ENCODE measurements at regions of chr6 and their contacts with region 1.

Region 1: GRCh38 chr6:32853541-32854375 is at the starts of genes PSMB9 and TAP1:
- DNase-seq: peak; percentile 94 to 95 (median 94)
- H3K4me3 ChIP-seq: peak within 1 kb of the TSS; percentile 79 to 99 (median 98)
- H3K4me3 Mint-ChIP-seq: peak within 1 kb of the TSS; percentile 99 to 100
- H3K27ac ChIP-seq: peak within 1 kb of the TSS; percentile 93 to 99
- H3K27ac Mint-ChIP-seq: peak within 1 kb of the TSS; percentile 97 to 100 (median 99)
- H3K4me1 ChIP-seq: peaks cover 44 to 58% of the 10 kb centered on the region in 2 donors
- H3K4me1 Mint-ChIP-seq: peaks cover 65% of the 10 kb centered on the region
- H3K27me3 ChIP-seq: no peaks in the 10 kb centered on the region
- H3K27me3 Mint-ChIP-seq: peaks cover 0 to 5% (median 1%) of the 10 kb centered on the region in 3 donors
- CTCF ChIP-seq: peak; percentile 85
- polyA plus RNA-seq, gene PSMB9: 204 to 405 (median 350) TPM
- polyA plus RNA-seq, gene TAP1: 119 to 221 (median 204) TPM

Region 2: DNA sequence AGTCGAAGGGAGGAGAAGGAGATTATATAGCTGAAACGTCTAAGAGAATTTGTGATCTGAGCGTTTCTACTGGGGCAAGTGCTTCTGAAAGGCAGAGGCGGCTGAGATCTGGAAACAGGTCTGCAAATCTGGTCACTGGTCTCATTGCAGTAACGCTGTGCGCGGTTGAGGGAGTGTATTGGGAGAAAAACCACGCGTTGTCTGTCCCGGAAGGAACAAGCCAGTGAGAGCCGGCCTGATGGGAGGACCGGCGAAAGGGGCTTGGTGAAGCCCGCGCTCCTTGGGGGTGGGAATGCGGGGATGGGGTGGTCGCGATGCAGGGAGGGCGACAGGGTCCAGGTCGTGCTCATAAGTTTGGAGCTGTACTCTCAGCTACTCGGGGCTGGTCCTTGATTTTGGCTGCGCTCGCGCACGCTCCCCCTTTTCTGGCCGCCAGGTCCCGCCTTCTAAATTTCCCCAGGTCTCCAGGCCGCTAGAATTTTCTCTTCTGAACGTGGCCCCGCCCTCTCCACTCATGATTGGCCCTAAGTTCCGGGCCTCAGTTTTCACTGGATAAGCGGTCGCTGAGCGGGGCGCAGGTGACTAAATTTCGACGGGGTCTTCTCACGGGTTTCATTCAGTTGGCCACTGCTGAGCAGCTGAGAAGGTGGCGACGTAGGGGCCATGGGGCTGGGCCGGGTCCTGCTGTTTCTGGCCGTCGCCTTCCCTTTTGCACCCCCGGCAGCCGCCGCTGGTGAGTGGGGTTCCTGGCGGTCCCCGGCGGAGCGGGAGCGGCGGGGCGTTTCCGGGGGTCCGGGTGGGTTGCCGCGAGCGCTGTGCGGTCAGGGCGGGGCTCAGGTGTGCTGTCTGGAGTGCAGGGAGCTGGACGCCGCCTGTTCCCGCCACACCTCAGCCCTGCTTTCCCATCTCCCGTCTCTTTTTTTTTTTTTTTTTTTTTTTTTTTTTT is 1356.0 kb before region 1 on chr6 and contains the start of gene MICB:
- intact Hi-C with region 1: no loop called
- DNase-seq: peak; percentile 51 to 68 (median 61)
- H3K4me3 ChIP-seq: peak within 1 kb of the TSS; percentile 51 to 98 (median 67)
- H3K4me3 Mint-ChIP-seq: peak within 1 kb of the TSS; percentile 85 to 96
- H3K27ac ChIP-seq: peak within 1 kb of the TSS; percentile 19 to 71
- H3K27ac Mint-ChIP-seq: peak within 1 kb of the TSS; percentile 78 to 95 (median 87)
- H3K4me1 ChIP-seq: peaks cover 47 to 62% of the 10 kb centered on the region in 2 donors
- H3K4me1 Mint-ChIP-seq: peaks cover 70% of the 10 kb centered on the region
- H3K27me3 ChIP-seq: no peaks in the 10 kb centered on the region
- H3K27me3 Mint-ChIP-seq: peaks cover 0 to 2% (median 0%) of the 10 kb centered on the region in 3 donors
- CTCF ChIP-seq: no peak
- polyA plus RNA-seq, gene MICB: 8.1 to 34.8 (median 11.4) TPM

Region 3: DNA sequence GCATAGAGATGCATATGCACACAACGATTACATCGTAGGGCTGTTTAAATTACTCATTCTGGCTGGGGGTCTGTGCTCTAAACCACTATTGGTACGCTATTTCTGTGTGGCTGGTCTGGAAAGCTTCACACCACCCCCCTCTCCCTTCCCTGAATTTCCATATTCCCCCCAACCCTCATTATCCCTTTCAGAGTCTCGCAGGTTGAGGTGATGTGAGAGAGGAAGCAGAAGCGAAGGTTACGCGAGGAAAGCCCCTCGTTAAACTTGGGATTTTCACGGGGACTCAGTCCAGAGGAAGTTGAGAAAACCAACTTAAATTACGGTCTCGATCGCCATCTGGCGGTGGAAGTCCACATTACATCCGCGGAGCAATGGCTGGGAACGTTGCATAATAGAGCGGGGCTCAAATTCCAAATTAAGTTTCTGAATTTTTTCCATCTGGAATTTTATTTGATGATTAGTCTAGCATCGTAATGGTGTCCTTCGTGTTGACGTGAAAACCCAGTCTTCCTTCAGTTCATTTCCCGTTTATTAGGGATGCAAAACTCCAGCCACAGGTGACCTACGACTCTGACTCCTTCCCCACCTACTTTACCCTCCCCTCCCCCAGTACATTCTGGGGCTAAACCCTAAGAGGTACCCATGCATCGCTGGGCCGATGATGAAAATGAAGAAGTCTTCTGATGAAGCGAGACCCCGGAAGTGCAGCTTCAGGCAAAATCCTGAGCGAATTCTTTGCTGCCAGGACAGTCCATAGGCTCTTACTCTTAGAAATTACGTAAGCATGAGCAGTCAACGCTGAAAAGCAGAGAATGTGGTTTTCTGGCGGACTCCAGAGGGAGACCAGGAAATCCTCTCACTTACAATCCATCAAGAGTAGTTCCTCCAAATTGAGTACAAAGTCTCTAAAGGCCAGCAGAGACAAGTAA is 56.6 kb before region 1 on chr6:
- intact Hi-C with region 1: no loop called
- DNase-seq: peak; percentile 65 to 88 (median 76)
- H3K4me3 ChIP-seq: peak overlapping the region; percentile 0 to 69 (median 31)
- H3K4me3 Mint-ChIP-seq: peak overlapping the region; percentile 72 to 93
- H3K27ac ChIP-seq: peak overlapping the region; percentile 8 to 42
- H3K27ac Mint-ChIP-seq: peak overlapping the region; percentile 62 to 90 (median 87)
- H3K4me1 ChIP-seq: peaks cover 43 to 46% of the 10 kb centered on the region in 2 donors
- H3K4me1 Mint-ChIP-seq: peaks cover 43% of the 10 kb centered on the region
- H3K27me3 ChIP-seq: peaks cover 0 to 5% of the 10 kb centered on the region in 2 donors
- H3K27me3 Mint-ChIP-seq: peaks cover 0 to 4% (median 3%) of the 10 kb centered on the region in 3 donors
- CTCF ChIP-seq: peak; percentile 92

Region 4: DNA sequence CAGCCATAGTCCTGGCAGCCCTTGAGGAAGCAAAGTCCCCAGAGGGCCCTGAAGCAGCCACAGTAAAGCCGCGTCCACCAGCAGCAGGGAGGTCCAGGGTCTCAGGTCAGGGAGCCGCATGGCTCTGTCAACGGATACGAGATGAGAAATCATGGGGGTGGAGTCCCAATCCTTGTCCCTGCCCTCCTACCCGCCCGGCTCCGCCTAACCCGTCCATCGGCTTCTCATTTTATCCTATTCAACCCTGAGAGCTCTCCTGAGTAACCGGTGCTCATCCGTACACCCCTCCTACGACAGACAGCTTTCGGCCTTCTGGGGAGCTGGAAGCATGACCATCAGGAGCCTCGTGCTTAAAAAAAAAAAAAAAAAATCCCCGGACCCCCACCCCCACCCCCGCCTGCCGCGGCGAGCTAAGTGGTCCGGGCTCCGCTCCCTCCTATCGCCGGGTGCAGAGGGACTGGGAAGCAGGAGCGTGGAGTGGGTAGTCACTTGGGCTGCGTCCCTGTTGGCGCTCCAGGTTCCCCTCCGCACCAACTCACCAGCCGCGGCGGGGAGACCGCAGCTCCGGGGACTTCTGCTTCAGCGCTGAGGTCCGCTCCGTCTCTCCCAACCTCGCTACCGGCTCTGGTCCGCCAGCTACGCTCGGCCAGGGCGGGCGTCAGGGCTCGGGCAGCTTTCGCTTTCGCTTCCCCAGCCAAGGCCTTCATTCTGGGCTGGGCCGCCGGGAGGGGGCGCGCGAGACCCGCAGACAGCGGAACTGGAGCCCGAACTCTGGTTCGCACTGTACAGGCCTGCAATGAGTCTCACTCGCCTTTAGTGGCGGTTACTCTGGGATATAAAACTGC is 15.4 kb before region 1 on chr6 and contains the start of gene TAP2:
- intact Hi-C with region 1: loop called (anchors 2 kb)
- DNase-seq: peak; percentile 94 to 95 (median 94)
- H3K4me3 ChIP-seq: peak within 1 kb of the TSS; percentile 71 to 91 (median 78)
- H3K4me3 Mint-ChIP-seq: peak within 1 kb of the TSS; percentile 87 to 89
- H3K27ac ChIP-seq: peak within 1 kb of the TSS; percentile 82 to 86
- H3K27ac Mint-ChIP-seq: peak within 1 kb of the TSS; percentile 84 to 94 (median 88)
- H3K4me1 ChIP-seq: peaks cover 32 to 47% of the 10 kb centered on the region in 2 donors
- H3K4me1 Mint-ChIP-seq: peaks cover 58% of the 10 kb centered on the region
- H3K27me3 ChIP-seq: no peaks in the 10 kb centered on the region
- H3K27me3 Mint-ChIP-seq: no peaks in the 10 kb centered on the region
- CTCF ChIP-seq: peak; percentile 93
- polyA plus RNA-seq, gene TAP2: 12.6 to 48.7 (median 25.9) TPM

Region 5: GRCh38 chr6:32971581-32972352 is 118.0 kb after region 1 on chr6:
- intact Hi-C with region 1: no loop called
- DNase-seq: peak; percentile 100
- H3K4me3 ChIP-seq: peak overlapping the region; percentile 93 to 96 (median 93)
- H3K4me3 Mint-ChIP-seq: peak overlapping the region; percentile 98 to 100
- H3K27ac ChIP-seq: peak overlapping the region; percentile 95 to 97
- H3K27ac Mint-ChIP-seq: peak overlapping the region; percentile 97 to 100 (median 99)
- H3K4me1 ChIP-seq: peaks cover 43 to 45% of the 10 kb centered on the region in 2 donors
- H3K4me1 Mint-ChIP-seq: peaks cover 48% of the 10 kb centered on the region
- H3K27me3 ChIP-seq: no peaks in the 10 kb centered on the region
- H3K27me3 Mint-ChIP-seq: peaks cover 0 to 10% (median 2%) of the 10 kb centered on the region in 3 donors
- CTCF ChIP-seq: no peak

Measured in CD14-positive monocyte (primary cell).